ENCODE measurements at regions of chr22 and their contacts with region 1.

Region 1: DNA sequence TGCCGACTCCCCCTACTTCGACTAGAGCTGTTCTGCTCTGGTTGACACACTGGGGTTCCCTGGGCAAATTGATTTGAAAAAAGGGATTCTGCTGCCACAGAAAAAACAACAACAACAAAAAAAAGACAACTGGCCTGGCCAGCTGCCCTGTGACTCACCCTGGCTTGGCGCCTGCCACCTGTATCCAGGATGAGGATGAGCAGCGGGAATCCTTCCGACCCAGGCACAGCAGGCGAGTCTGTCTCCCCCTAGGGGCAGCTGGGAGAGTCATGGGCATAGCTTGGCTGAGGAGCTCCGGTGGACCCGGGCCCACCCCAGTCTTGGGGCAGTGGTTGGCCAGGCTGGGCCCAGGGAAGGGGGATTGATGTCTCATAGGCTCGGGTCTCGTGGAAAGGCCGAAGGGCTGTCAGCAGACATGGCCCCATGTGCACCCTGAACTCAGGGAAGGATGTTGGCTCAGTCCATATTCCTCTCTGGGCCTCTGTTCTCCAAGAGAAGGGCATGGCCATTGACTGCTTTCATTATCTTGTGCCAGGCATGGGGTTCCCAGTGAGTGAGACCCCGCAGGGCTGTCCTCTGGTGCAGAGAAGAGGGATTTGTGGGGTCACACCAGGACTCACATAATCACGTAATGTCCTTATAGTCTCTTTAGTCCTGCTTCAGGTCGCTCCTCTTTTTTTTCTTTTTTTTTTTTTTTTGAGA is 10.4 kb upstream of the SUN2 start:
- DNase-seq: no peak
- H3K4me3 ChIP-seq: no peak overlapping the region
- H3K27ac ChIP-seq: no peak overlapping the region
- H3K4me1 ChIP-seq: peaks cover 0 to 6% of the 10 kb centered on the region in 2 donors
- H3K27me3 ChIP-seq: no peaks in the 10 kb centered on the region
- CTCF ChIP-seq: peak; percentile 28 to 62 (median 52)

Region 2: DNA sequence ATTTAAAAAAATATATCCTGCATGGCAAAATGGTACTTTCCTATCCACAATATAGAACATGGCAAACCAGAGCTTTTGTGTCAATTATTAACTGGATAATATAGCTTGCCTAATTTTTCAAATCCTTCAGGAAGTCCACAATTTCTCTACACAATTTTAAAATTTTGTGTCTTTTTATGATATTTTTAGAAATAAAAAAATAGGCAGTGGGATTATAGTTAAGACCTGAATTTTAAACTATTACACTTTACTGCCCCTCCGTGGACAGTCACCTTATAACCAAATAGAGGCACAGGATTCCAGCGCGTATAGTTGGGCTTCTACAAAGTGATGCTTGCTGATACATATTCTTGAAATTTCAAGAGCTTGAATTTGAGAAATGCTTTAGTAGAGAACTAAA is 194.2 kb before region 1 on chr22:
- intact Hi-C with region 1: no loop called
- DNase-seq: no peak
- H3K4me3 ChIP-seq: no peak overlapping the region
- H3K27ac ChIP-seq: no peak overlapping the region
- H3K4me1 ChIP-seq: peaks cover 4 to 31% of the 10 kb centered on the region in 2 donors
- H3K27me3 ChIP-seq: no peaks in the 10 kb centered on the region
- CTCF ChIP-seq: peak; percentile 51 to 57 (median 55)

Region 3: GRCh38 chr22:38843201-38843715 is 77.0 kb after region 1 on chr22:
- intact Hi-C with region 1: loop called (anchors 2 kb)
- DNase-seq: no peak
- H3K4me3 ChIP-seq: peak overlapping the region; percentile 79 to 94
- H3K27ac ChIP-seq: peak overlapping the region; percentile 79 to 89
- H3K4me1 ChIP-seq: peaks cover 0 to 29% of the 10 kb centered on the region in 2 donors
- H3K27me3 ChIP-seq: no peaks in the 10 kb centered on the region
- CTCF ChIP-seq: peak in 2 of 3 experiments; percentile 25 to 54

Region 4: GRCh38 chr22:38862375-38863329 is 96.4 kb after region 1 on chr22:
- intact Hi-C with region 1: loop called (anchors 5 kb)
- DNase-seq: peak in 1 of 2 donors; percentile 85
- H3K4me3 ChIP-seq: no peak overlapping the region
- H3K27ac ChIP-seq: no peak overlapping the region
- H3K4me1 ChIP-seq: peaks cover 20 to 50% of the 10 kb centered on the region in 2 donors
- H3K27me3 ChIP-seq: no peaks in the 10 kb centered on the region
- CTCF ChIP-seq: no peak

Region 5: DNA sequence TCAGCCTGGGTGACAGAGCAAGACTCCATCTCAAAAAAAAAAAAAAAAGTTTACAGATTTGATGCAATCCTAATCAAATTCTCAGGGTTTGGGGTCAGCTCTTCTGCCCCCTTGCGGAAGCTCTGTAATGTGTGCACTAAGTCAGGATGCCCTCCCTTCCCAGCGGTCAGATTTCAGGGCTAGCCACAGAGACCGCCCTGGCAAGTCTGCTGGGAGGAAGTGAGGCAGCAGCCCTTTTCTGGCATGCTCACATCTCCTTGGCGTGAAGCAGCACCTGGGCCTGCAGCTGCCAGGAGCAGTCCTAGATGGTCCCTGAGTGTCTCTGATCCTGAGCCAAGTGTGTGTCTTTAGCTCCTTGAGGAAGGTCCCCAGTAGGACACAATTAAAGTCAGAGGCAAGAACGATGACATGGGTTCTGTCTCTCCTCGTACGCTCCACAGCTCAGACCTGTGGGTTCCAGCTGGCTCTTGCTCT is 237.0 kb after region 1 on chr22:
- intact Hi-C with region 1: loop called (anchors 5 kb)
- DNase-seq: peak in 1 of 2 donors; percentile 86
- H3K4me3 ChIP-seq: no peak overlapping the region
- H3K27ac ChIP-seq: peak overlapping the region in 1 of 2 donors; percentile 6
- H3K4me1 ChIP-seq: peaks cover 0 to 4% of the 10 kb centered on the region in 2 donors
- H3K27me3 ChIP-seq: no peaks in the 10 kb centered on the region
- CTCF ChIP-seq: peak; percentile 66 to 79 (median 68)

Region 6: DNA sequence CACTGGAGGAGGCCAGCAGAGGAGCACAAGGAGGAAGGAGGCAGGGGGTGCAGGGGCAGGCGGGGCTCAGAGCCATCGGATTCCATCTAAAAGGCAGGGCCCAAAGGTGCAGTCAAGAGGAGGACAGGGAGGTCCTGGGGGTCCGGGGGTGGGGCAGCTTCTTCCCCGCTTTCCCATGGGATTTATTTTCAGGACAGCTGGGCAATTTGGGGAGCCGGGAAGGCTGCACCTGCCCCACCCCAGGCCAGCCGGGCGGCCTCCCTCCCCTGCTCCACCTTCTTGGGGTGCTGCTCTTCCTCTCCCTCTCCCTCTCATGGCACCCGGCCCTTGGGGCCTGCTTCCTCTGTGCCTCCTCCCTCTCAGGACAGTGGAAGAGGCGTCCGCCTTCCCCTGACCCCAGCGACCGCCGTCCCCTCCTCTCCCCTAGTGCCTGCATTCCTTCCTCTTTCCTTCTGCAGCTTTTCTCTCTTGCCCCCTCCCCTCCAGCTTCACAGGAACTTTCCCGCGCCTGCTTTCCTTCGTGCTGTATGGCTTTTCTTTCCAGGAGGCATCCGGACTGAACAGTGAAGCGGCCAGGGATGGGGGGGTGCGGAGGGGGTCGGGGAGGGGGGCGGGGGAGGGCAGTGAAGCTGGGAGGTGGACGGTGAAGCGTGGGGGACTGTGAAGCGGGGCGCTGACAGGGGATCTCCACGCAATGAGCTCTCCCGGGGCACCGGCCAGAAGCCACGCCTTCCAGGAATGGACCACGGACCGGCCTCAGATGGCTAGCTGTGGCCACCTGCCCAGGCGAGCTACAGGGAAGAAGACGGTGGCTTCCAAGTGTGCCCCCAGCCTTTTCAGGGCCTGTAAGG is 357.7 kb after region 1 on chr22:
- intact Hi-C with region 1: loop called (anchors 5 kb)
- DNase-seq: no peak
- H3K4me3 ChIP-seq: no peak overlapping the region
- H3K27ac ChIP-seq: no peak overlapping the region
- H3K4me1 ChIP-seq: no peaks in the 10 kb centered on the region
- H3K27me3 ChIP-seq: no peaks in the 10 kb centered on the region
- CTCF ChIP-seq: no peak

Measured in ascending aorta (tissue), 2 donors.